GM10248 (cell line): ENCODE measurements at regions of chr11 and their contacts with region 1.

Region 1: GRCh38 chr11:107696140-107696539 is 15.7 kb downstream of the SLN start:
- DNase-seq: no peak
- CTCF ChIP-seq: no peak

Region 2: GRCh38 chr11:107573438-107573837 is 122.7 kb before region 1 on chr11:
- CTCF ChIA-PET with region 1: interaction called, 10 read pairs
- POLR2A ChIA-PET with region 1: no interaction called
- DNase-seq: no peak
- CTCF ChIP-seq: no peak

Region 3: DNA sequence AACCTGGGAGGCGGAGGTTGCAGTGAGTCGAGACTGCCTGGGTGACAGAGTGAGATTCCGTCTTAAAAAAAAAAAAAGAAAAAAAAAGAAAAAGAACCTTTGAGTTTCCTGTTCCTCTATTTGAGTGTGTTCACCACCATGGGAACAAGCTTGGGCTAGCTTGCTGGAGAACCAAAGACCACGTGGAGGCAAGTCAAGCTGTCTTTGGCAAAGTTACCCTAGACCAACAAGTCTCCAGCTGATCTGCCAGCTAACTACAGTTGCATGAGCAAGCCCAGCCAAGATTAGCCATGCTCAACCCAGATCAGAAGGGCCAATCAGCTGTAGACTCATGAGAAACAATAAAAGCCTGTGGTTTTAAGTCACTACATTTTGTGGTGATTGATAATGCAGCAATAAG is 14.0 kb before region 1 on chr11:
- CTCF ChIA-PET with region 1: no interaction called
- POLR2A ChIA-PET with region 1: no interaction called
- DNase-seq: no peak
- CTCF ChIP-seq: no peak

Region 4: GRCh38 chr11:107821199-107821927 is 125.2 kb after region 1 on chr11:
- CTCF ChIA-PET with region 1: no interaction called
- POLR2A ChIA-PET with region 1: no interaction called
- DNase-seq: no peak
- CTCF ChIP-seq: no peak